H1 (cell line): ENCODE measurements at regions of chr12 and their contacts with region 1.

Region 1: GRCh38 chr12:12327802-12328201 is 22.2 kb downstream of the MANSC1 start:
- DNase-seq: no peak
- H3K4me3 ChIP-seq: no peak overlapping the region
- H3K27ac ChIP-seq: no peak overlapping the region
- H3K4me1 ChIP-seq: peaks cover 4 to 11% (median 9%) of the 10 kb centered on the region in 4 experiments; a peak in 4 of 7 replicates
- H3K27me3 ChIP-seq: no peaks in the 10 kb centered on the region
- CTCF ChIP-seq: peak in 2 of 3 experiments; percentile 46 to 74; a peak in 2 of 4 replicates
- EP300 ChIP-seq: no peak
- POLR2A ChIP-seq: no peak
- RAD21 ChIP-seq: peak; percentile 79 to 83

Region 2: GRCh38 chr12:12070674-12071656 is 256.8 kb before region 1 on chr12 and contains the start of gene BCL2L14:
- CTCF ChIA-PET with region 1: interaction called, 11 read pairs
- POLR2A ChIA-PET with region 1: no interaction called
- DNase-seq: no peak
- H3K4me3 ChIP-seq: no peak within 1 kb of the TSS
- H3K27ac ChIP-seq: no peak within 1 kb of the TSS
- H3K4me1 ChIP-seq: peaks cover 0 to 10% (median 4%) of the 10 kb centered on the region in 4 experiments; a peak in 6 of 7 replicates
- H3K27me3 ChIP-seq: no peaks in the 10 kb centered on the region
- CTCF ChIP-seq: no peak
- EP300 ChIP-seq: no peak
- POLR2A ChIP-seq: no peak
- RAD21 ChIP-seq: peak in 1 of 2 experiments; percentile 33; a peak in 1 of 4 replicates
- total RNA-seq, gene BCL2L14: 2.4 and 2.9 TPM in 2 replicates

Region 3: GRCh38 chr12:12081836-12082497 is 245.8 kb before region 1 on chr12:
- CTCF ChIA-PET with region 1: interaction called, 42 read pairs
- POLR2A ChIA-PET with region 1: no interaction called
- DNase-seq: peak in 1 of 2 experiments; percentile 52
- H3K4me3 ChIP-seq: no peak overlapping the region
- H3K27ac ChIP-seq: no peak overlapping the region
- H3K4me1 ChIP-seq: peaks cover 5 to 12% (median 7%) of the 10 kb centered on the region in 4 experiments; a peak in 6 of 7 replicates
- H3K27me3 ChIP-seq: no peaks in the 10 kb centered on the region
- CTCF ChIP-seq: peak in 2 of 3 experiments; percentile 24 to 34; a peak in 2 of 4 replicates
- EP300 ChIP-seq: no peak
- POLR2A ChIP-seq: no peak
- RAD21 ChIP-seq: peak; percentile 70 to 78

Region 4: DNA sequence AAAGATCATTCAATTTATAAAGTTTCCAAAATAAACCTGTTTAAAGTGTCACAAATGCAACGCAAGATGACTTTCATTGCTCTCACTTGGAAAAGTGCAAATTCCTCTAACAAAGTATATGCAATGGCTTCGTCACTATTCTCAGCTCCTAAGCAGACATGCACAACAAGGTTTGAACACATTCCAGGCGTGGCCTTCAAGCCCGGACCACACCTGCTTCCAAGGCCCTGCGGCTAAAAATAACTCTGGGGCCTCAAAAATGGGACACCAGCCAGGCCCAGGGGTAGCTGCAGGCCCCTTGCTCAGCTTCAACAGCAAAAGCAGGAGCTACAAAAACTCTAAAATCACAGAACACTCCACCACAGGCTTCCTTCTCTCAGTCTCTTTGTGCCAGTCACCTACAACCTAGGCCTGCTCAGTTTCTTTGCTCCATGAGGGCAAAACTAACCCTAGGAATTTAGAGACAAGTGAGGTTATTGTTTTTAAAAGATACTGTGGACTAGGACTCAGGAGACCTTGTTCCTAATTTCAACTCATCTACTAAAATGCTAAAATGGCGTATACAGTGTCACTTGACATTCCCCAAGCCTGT is 205.5 kb after region 1 on chr12:
- CTCF ChIA-PET with region 1: no interaction called
- POLR2A ChIA-PET with region 1: no interaction called
- DNase-seq: no peak
- H3K4me3 ChIP-seq: no peak overlapping the region
- H3K27ac ChIP-seq: no peak overlapping the region
- H3K4me1 ChIP-seq: peaks cover 0 to 8% (median 6%) of the 10 kb centered on the region in 4 experiments; a peak in 4 of 7 replicates
- H3K27me3 ChIP-seq: no peaks in the 10 kb centered on the region
- CTCF ChIP-seq: no peak
- EP300 ChIP-seq: no peak
- POLR2A ChIP-seq: no peak
- RAD21 ChIP-seq: no peak